Left ventricle myocardium inferior (tissue), 1 donor: ENCODE measurements at regions of chr7 and their contacts with region 1.

Region 1: DNA sequence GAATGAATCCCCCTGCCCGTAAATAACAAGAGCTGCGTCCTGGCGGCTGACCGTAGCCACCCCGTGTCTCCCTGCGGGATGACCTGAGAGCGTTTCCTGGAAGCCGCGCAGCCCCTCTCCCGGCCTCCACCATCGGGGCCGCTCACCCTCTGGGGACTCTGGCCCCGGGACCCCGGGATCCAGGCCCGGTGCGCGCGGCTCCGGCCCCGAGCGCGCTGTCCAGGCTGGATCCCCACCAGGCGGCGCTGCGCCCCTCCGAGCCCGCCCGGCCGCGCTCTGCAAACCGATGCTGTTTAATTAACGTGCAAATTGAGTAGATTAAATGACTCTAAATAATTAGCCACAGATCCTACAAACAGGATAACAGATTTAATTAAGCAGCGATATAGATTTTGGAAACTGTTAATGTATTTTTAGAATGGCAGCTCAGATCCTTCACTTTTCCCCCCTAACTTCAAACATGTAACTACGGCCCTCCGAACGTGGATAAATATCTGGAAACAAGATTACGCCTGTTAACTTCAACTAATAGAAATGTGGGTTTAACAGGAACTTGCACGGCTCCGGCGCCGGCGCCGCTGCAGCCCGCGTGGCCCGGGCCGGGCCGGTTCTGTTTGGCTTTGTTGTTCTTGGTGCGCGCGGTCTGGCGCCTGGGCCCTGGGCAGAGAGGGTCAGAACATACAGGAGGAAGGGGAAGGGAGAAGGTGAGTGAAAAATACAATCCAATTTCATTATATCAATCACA is 7.1 kb upstream of the UNCX start:
- DNase-seq: no peak
- H3K4me3 ChIP-seq: no peak overlapping the region
- H3K27ac ChIP-seq: no peak overlapping the region
- H3K4me1 ChIP-seq: peaks cover 20% of the 10 kb centered on the region
- H3K27me3 ChIP-seq: peaks cover 100% of the 10 kb centered on the region
- CTCF ChIP-seq: peak; percentile 84

Region 2: GRCh38 chr7:1432411-1433082 is 206.9 kb after region 1 on chr7:
- intact Hi-C with region 1: loop called (anchors 10 kb)
- DNase-seq: peak; percentile 69
- H3K4me3 ChIP-seq: no peak overlapping the region
- H3K27ac ChIP-seq: no peak overlapping the region
- H3K4me1 ChIP-seq: peaks cover 6% of the 10 kb centered on the region
- H3K27me3 ChIP-seq: peaks cover 49% of the 10 kb centered on the region
- CTCF ChIP-seq: peak; percentile 98

Region 3: DNA sequence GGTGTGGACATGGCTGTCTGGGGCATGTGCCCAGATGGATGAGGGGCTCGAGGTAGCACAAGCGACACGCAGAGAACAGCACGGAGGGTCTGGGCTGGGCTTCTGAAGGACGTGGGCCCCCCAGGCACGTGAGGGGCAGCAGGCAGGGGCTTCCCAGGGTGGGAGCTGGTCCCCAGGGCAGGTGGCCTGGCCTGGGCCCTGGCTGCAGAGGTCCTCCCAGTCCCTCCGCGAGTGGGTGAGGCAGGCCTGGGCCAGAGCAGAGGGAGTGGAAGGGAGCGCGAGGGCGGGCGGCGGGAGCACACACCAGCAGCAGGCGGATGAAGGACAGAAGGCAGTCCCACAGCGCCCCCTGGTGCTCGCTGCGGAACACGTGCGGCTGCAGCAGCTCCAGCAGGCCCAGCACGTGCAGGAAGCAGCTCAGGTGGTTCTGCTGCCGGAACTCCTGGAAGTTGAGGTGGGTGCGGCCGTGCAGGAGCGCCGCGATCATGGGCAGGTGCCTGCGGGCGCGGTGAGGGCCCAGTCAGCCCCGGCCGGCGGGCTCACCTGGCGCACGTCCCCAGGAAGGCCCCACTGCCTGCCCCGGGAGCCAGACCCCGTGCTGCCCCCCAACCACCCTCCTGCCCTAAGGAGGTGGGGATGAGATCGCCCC is 248.4 kb after region 1 on chr7:
- intact Hi-C with region 1: loop called (anchors 10 kb)
- DNase-seq: peak; percentile 86
- H3K4me3 ChIP-seq: no peak overlapping the region
- H3K27ac ChIP-seq: no peak overlapping the region
- H3K4me1 ChIP-seq: peaks cover 11% of the 10 kb centered on the region
- H3K27me3 ChIP-seq: no peaks in the 10 kb centered on the region
- CTCF ChIP-seq: peak; percentile 95